ENCODE measurements at regions of chr9 and their contacts with region 1.

Region 1: DNA sequence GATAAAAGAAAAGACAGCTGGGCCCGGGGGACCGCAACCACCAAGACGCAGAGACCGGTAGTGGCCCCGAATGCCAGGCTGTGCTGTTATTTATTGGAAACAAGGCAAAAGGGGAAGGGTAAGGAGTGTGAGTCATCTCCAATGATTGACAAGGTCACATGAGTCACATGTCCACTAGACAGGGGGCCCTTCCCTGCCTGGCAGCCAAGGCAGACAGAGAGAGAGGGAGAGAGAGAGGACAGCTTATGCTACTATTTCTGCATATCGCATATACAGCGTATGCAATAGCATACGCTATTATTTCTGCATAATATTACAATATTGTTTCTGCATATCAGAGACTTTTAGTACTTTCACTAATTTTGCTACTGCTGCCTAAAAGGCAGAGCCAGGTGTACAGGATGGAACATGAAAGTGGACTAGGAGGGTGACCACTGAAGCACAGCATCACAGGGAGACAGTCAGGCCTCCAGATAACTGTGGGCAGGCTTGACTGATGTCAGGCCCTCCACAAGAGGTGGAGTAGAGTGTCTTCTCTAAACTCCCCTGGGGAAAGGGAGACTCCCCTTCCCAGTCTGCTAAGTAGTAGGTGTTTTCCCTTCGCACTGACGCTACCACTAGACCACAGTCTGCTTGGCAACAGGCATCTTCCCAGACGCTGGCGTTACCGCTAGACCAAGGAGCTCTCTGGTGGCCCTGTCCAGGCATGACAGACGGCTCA is 50.3 kb downstream of the RFX3 start:
- DNase-seq: peak in 1 of 2 donors; percentile 38
- ATAC-seq: no peak
- H3K4me3 ChIP-seq: no peak overlapping the region
- H3K27ac ChIP-seq: no peak overlapping the region
- H3K4me1 ChIP-seq: peaks cover 27% of the 10 kb centered on the region
- H3K27me3 ChIP-seq: no peaks in the 10 kb centered on the region
- CTCF ChIP-seq: no peak

Region 2: DNA sequence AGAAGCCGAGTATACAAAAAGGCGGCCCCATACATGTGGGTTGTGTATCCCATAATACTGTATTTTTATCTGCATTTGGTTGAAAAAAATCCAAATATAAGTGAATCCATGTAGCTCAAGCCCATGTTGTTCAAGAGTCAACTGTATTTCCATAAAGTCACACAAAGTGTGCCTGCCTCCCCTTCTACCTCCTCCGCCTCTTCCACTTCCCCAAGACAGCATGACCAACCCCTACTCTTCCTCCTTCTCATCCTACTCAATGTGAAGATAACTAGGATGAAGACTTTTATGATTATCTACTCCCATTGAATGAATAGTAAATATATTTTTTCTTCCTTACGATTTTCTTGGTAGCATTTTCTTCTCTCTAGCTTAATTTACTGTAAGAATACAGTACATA is 42.4 kb before region 1 on chr9:
- intact Hi-C with region 1: no loop called
- DNase-seq: no peak
- ATAC-seq: no peak
- H3K4me3 ChIP-seq: no peak overlapping the region
- H3K27ac ChIP-seq: no peak overlapping the region
- H3K4me1 ChIP-seq: peaks cover 29% of the 10 kb centered on the region
- H3K27me3 ChIP-seq: no peaks in the 10 kb centered on the region
- CTCF ChIP-seq: no peak

Region 3: DNA sequence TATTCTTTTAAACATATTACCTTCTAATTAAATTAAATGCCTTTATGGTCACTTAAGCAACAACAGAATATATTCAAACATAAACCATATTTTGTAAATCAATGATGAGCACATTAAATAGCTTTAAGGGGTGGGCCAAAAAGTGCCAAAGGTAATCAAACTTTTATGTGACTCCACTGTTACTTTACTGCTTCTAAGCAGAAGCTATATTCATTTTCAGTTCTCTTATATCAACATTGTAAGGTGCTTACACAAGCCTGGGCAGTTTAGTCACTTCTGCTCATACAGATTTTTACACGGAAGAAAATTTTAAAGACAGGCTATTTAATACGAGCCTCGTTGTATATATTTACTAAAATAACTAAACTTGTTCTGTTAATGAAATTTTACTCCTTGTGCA is 20.4 kb after region 1 on chr9:
- intact Hi-C with region 1: loop called in 1 of 2 experiments (anchors 1 kb)
- DNase-seq: no peak
- ATAC-seq: no peak
- H3K4me3 ChIP-seq: peak overlapping the region; percentile 39
- H3K27ac ChIP-seq: peak overlapping the region; percentile 71
- H3K4me1 ChIP-seq: peaks cover 37% of the 10 kb centered on the region
- H3K27me3 ChIP-seq: no peaks in the 10 kb centered on the region
- CTCF ChIP-seq: no peak

Measured in psoas muscle (tissue), 8 donors.